ENCODE measurements at regions of chr20 and their contacts with region 1.

Region 1: GRCh38 chr20:40689943-40690835 is 1.2 kb upstream of the MAFB start:
- DNase-seq: peak; percentile 89
- H3K4me3 ChIP-seq: peak overlapping the region; percentile 55 to 77
- H3K27ac ChIP-seq: peak overlapping the region in 1 of 2 experiments; percentile 85; a peak in 2 of 4 replicates
- H3K4me1 ChIP-seq: peaks cover 0 to 11% of the 10 kb centered on the region in 2 experiments; a peak in 1 of 4 replicates
- H3K27me3 ChIP-seq: peaks cover 61% of the 10 kb centered on the region
- CTCF ChIP-seq: peak; percentile 82
- EP300 ChIP-seq: no peak
- RAD21 ChIP-seq: peak; percentile 89

Region 2: GRCh38 chr20:39885975-39886649 is 804.1 kb before region 1 on chr20:
- CTCF ChIA-PET with region 1: interaction called, 18 read pairs
- POLR2A ChIA-PET with region 1: no interaction called
- DNase-seq: peak; percentile 29
- H3K4me3 ChIP-seq: no peak overlapping the region
- H3K27ac ChIP-seq: no peak overlapping the region
- H3K4me1 ChIP-seq: no peaks in the 10 kb centered on the region; a peak in 1 of 4 replicates
- H3K27me3 ChIP-seq: no peaks in the 10 kb centered on the region
- CTCF ChIP-seq: peak; percentile 61
- EP300 ChIP-seq: no peak
- RAD21 ChIP-seq: peak; percentile 79

Region 3: GRCh38 chr20:40160097-40160550 is 530.1 kb before region 1 on chr20:
- CTCF ChIA-PET with region 1: interaction called, 15 read pairs
- POLR2A ChIA-PET with region 1: no interaction called
- DNase-seq: peak; percentile 38
- H3K4me3 ChIP-seq: no peak overlapping the region; a peak in 1 of 4 replicates
- H3K27ac ChIP-seq: no peak overlapping the region
- H3K4me1 ChIP-seq: no peaks in the 10 kb centered on the region
- H3K27me3 ChIP-seq: no peaks in the 10 kb centered on the region; the same call in 1 of the 2 replicates
- CTCF ChIP-seq: peak; percentile 73
- EP300 ChIP-seq: no peak
- RAD21 ChIP-seq: peak; percentile 73

Region 4: DNA sequence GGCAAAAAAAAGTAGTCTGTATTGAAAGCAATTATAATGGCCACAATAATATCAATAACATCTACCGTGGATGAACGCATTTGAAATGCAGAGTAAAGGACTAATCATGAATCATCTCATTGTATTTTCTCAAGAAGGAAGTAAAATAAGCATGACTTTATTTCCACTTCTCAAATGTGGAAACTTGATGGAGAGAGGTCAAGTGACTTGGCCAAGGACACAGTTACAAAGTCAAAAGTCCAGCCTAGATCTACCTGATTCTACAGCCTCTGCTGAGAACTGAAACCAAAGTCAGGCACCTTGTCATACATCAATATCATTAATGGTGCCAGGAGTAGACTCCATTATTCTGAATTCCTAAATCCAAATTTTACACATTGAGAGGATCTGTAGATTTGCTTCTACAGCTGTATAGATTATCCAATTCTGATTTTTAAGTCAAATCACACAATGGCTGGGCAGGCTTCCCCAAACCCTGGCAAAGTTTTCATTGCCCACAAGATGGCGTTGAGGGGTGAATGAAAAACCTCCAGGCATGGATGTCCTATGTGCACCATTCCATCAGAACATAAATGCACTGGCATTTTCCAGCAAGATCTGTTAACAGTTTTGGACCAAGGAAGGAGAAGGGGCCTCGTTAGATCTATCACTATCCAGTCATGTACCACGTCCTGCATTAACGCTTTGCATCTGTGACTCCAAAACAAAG is 424.2 kb before region 1 on chr20:
- CTCF ChIA-PET with region 1: interaction called, 19 read pairs
- POLR2A ChIA-PET with region 1: no interaction called
- DNase-seq: peak; percentile 35
- H3K4me3 ChIP-seq: no peak overlapping the region; a peak in 1 of 4 replicates
- H3K27ac ChIP-seq: no peak overlapping the region
- H3K4me1 ChIP-seq: peaks cover 0 to 4% of the 10 kb centered on the region in 2 experiments; a peak in 2 of 4 replicates
- H3K27me3 ChIP-seq: no peaks in the 10 kb centered on the region
- CTCF ChIP-seq: peak; percentile 57
- EP300 ChIP-seq: no peak
- RAD21 ChIP-seq: peak; percentile 77

Region 5: GRCh38 chr20:40276301-40276700 is 413.9 kb before region 1 on chr20:
- CTCF ChIA-PET with region 1: interaction called, 11 read pairs
- POLR2A ChIA-PET with region 1: interaction called, 4 read pairs
- DNase-seq: no peak
- H3K4me3 ChIP-seq: no peak overlapping the region
- H3K27ac ChIP-seq: peak overlapping the region in 1 of 2 experiments; percentile 90; a peak in 1 of 4 replicates
- H3K4me1 ChIP-seq: peaks cover 13 to 28% of the 10 kb centered on the region in 2 experiments; a peak in 3 of 4 replicates
- H3K27me3 ChIP-seq: no peaks in the 10 kb centered on the region
- CTCF ChIP-seq: no peak
- EP300 ChIP-seq: no peak
- RAD21 ChIP-seq: no peak

Region 6: GRCh38 chr20:40361916-40362315 is 328.3 kb before region 1 on chr20:
- CTCF ChIA-PET with region 1: no interaction called
- POLR2A ChIA-PET with region 1: no interaction called
- DNase-seq: no peak
- H3K4me3 ChIP-seq: no peak overlapping the region
- H3K27ac ChIP-seq: no peak overlapping the region
- H3K4me1 ChIP-seq: no peaks in the 10 kb centered on the region
- H3K27me3 ChIP-seq: no peaks in the 10 kb centered on the region
- CTCF ChIP-seq: no peak
- EP300 ChIP-seq: no peak
- RAD21 ChIP-seq: no peak

Region 7: GRCh38 chr20:40489866-40490265 is 200.3 kb before region 1 on chr20:
- CTCF ChIA-PET with region 1: no interaction called
- POLR2A ChIA-PET with region 1: no interaction called
- DNase-seq: no peak
- H3K4me3 ChIP-seq: no peak overlapping the region
- H3K27ac ChIP-seq: no peak overlapping the region
- H3K4me1 ChIP-seq: no peaks in the 10 kb centered on the region
- H3K27me3 ChIP-seq: peaks cover 4% of the 10 kb centered on the region; the same call in 1 of the 2 replicates
- CTCF ChIP-seq: no peak
- EP300 ChIP-seq: no peak
- RAD21 ChIP-seq: no peak

Region 8: GRCh38 chr20:40706977-40707582 is 16.9 kb after region 1 on chr20:
- CTCF ChIA-PET with region 1: interaction called, 24 read pairs
- POLR2A ChIA-PET with region 1: interaction called, 4 read pairs
- DNase-seq: no peak
- H3K4me3 ChIP-seq: no peak overlapping the region
- H3K27ac ChIP-seq: no peak overlapping the region
- H3K4me1 ChIP-seq: no peaks in the 10 kb centered on the region; a peak in 1 of 4 replicates
- H3K27me3 ChIP-seq: no peaks in the 10 kb centered on the region
- CTCF ChIP-seq: no peak
- EP300 ChIP-seq: no peak
- RAD21 ChIP-seq: 0 out of 2 replicates have a peak, but pooled peaks have one; percentile 6

Region 9: GRCh38 chr20:40754339-40754943 is 64.3 kb after region 1 on chr20:
- CTCF ChIA-PET with region 1: no interaction called
- POLR2A ChIA-PET with region 1: no interaction called
- DNase-seq: peak; percentile 48
- H3K4me3 ChIP-seq: no peak overlapping the region
- H3K27ac ChIP-seq: no peak overlapping the region; a peak in 1 of 4 replicates
- H3K4me1 ChIP-seq: peaks cover 0 to 8% of the 10 kb centered on the region in 2 experiments; a peak in 1 of 4 replicates
- H3K27me3 ChIP-seq: no peaks in the 10 kb centered on the region
- CTCF ChIP-seq: no peak
- EP300 ChIP-seq: no peak
- RAD21 ChIP-seq: no peak

Region 10: GRCh38 chr20:40956542-40957264 is 266.5 kb after region 1 on chr20:
- CTCF ChIA-PET with region 1: interaction called, 12 read pairs
- POLR2A ChIA-PET with region 1: no interaction called
- DNase-seq: no peak
- H3K4me3 ChIP-seq: no peak overlapping the region
- H3K27ac ChIP-seq: no peak overlapping the region
- H3K4me1 ChIP-seq: no peaks in the 10 kb centered on the region
- H3K27me3 ChIP-seq: no peaks in the 10 kb centered on the region
- CTCF ChIP-seq: no peak
- EP300 ChIP-seq: no peak
- RAD21 ChIP-seq: no peak